Gastrocnemius medialis (tissue), 4 donors: ENCODE measurements at regions of chr1 and their contacts with region 1.

Region 1: DNA sequence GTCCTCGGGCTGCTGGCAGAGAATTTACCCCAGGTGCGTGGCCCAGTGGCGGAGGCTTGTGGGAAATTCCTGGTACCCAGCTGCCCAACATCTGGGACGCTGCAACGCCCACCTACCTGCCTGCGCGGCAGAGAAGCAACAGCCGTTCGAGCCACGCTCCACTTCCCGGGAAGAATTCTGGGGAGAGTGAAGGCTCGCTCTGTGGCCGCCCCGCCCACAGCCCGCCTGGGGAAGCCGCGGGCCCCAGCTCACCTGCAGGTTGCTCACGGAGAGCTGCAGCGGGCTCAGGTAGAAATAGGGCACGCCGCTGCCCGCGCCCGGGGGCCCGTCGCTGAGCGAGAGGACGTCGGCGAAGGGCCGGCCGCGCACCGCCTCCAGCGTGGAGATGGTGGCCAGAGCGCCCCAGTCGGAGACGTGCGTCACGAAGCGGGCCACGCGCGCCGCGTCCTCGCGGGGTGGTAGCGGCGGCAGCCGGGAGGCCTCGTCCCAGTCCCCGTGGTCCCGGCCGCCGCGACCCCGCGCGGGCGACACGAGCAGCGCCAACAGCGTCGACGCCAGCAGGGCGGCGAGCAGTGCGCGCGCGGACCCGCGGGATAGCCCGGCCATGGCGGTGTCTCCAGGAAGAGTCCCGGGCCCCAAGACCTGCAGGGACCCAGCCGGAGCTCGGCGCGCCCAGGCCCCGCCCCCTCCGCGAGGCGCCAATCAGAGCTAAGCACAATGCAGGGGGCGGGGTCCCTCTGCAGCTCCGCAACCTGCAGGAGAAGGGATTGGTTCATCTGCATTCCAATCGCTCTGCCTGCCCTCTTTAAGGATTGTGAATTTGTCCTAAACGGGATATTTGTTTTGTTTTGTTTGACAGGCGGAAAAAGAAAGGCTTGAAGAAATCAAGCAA is at the start of gene CREG1:
- DNase-seq: peak; percentile 90 to 94
- ATAC-seq: peak; percentile 88 to 91
- H3K4me3 ChIP-seq: peak within 1 kb of the TSS; percentile 66 to 89 (median 74)
- H3K27ac ChIP-seq: peak within 1 kb of the TSS; percentile 66 to 91 (median 82)
- H3K4me1 ChIP-seq: peaks cover 35 to 49% of the 10 kb centered on the region in 2 donors
- H3K27me3 ChIP-seq: no peaks in the 10 kb centered on the region
- CTCF ChIP-seq: peak in 1 of 5 experiments; percentile 14
- POLR2A ChIP-seq: peak; percentile 95 to 96
- total RNA-seq, gene CREG1: 69.9 to 99.6 (median 80.7) TPM

Region 2: GRCh38 chr1:167105271-167106118 is 447.9 kb before region 1 on chr1:
- in situ Hi-C with region 1: no loop called
- intact Hi-C with region 1: loop called (anchors 10 kb)
- DNase-seq: peak; percentile 42 to 65
- ATAC-seq: peak; percentile 91
- H3K4me3 ChIP-seq: peak overlapping the region in 3 of 4 donors; percentile 10 to 31 (median 22)
- H3K27ac ChIP-seq: peak overlapping the region; percentile 85 to 94 (median 89)
- H3K4me1 ChIP-seq: peaks cover 71 to 72% of the 10 kb centered on the region in 2 donors
- H3K27me3 ChIP-seq: no peaks in the 10 kb centered on the region
- CTCF ChIP-seq: no peak
- POLR2A ChIP-seq: peak in 1 of 2 donors; percentile 31

Region 3: GRCh38 chr1:167454894-167455785 is 98.2 kb before region 1 on chr1:
- in situ Hi-C with region 1: no loop called
- intact Hi-C with region 1: loop called (anchors 5 kb)
- DNase-seq: peak; percentile 66 to 67
- ATAC-seq: peak; percentile 79 to 80
- H3K4me3 ChIP-seq: peak overlapping the region; percentile 72 to 94 (median 76)
- H3K27ac ChIP-seq: peak overlapping the region; percentile 81 to 93 (median 86)
- H3K4me1 ChIP-seq: no peaks in the 10 kb centered on the region
- H3K27me3 ChIP-seq: no peaks in the 10 kb centered on the region
- CTCF ChIP-seq: no peak
- POLR2A ChIP-seq: peak; percentile 31 to 56

Region 4: GRCh38 chr1:167687919-167688519 is 134.6 kb after region 1 on chr1:
- in situ Hi-C with region 1: no loop called
- intact Hi-C with region 1: loop called (anchors 2 kb)
- DNase-seq: peak; percentile 51 to 68
- ATAC-seq: peak; percentile 38 to 39
- H3K4me3 ChIP-seq: no peak overlapping the region
- H3K27ac ChIP-seq: peak overlapping the region; percentile 82 to 92 (median 86)
- H3K4me1 ChIP-seq: peaks cover 46 to 61% of the 10 kb centered on the region in 2 donors
- H3K27me3 ChIP-seq: no peaks in the 10 kb centered on the region
- CTCF ChIP-seq: peak; percentile 91 to 96 (median 95)
- POLR2A ChIP-seq: no peak